Sigmoid colon (tissue), 7 donors: ENCODE measurements at regions of chr2 and their contacts with region 1.

Region 1: GRCh38 chr2:47437287-47437686 is 34.3 kb downstream of the MSH2 start:
- DNase-seq: no peak
- H3K4me3 ChIP-seq: no peak overlapping the region
- H3K27ac ChIP-seq: no peak overlapping the region
- H3K4me1 ChIP-seq: no peaks in the 10 kb centered on the region
- H3K27me3 ChIP-seq: no peaks in the 10 kb centered on the region
- CTCF ChIP-seq: peak in 2 of 4 experiments; percentile 6 to 33
- EP300 ChIP-seq: no peak
- POLR2A ChIP-seq: no peak

Region 2: GRCh38 chr2:47534179-47534919 is 97.1 kb after region 1 on chr2:
- intact Hi-C with region 1: no loop called
- DNase-seq: peak; percentile 73
- H3K4me3 ChIP-seq: no peak overlapping the region
- H3K27ac ChIP-seq: no peak overlapping the region
- H3K4me1 ChIP-seq: peaks cover 0 to 11% (median 7%) of the 10 kb centered on the region in 4 donors
- H3K27me3 ChIP-seq: no peaks in the 10 kb centered on the region
- CTCF ChIP-seq: no peak
- EP300 ChIP-seq: no peak
- POLR2A ChIP-seq: no peak

Region 3: DNA sequence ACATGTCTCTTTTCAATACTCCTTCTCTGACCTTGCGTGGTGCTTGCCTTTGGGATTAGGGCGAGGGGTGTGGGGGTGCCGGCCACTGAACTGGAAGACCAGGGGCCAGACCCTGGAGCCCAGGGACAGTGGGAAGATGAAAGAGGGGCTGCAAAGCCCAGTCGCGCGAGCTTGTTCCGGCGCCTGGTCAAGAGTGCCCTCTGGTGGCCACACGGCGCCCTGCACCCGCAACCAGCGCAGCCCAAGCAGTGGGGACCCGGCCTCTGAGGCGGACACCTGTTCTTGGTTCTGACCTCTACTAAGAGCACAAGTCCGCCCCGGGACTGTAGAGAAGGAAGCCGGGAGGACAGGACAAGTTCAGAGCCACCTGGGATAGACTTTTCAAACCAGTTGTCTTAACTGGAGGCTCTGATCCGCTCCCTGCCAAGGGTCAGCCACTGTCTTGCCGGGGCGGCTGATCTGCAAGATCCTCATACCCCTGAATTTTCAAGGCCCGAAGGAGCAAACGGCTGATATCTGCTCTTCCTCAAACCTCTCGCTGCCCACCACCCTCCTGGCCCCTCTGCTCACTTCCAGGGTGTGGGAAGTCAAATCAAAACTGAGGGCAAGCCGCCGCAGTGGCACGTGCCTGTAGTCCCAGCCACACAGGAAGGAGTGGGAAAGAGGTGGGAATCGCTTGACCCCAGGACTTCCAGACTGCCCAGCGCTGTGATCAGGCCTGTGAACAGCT is 330.8 kb after region 1 on chr2:
- intact Hi-C with region 1: loop called (anchors 1 kb)
- DNase-seq: peak; percentile 79
- H3K4me3 ChIP-seq: no peak overlapping the region
- H3K27ac ChIP-seq: no peak overlapping the region
- H3K4me1 ChIP-seq: no peaks in the 10 kb centered on the region
- H3K27me3 ChIP-seq: no peaks in the 10 kb centered on the region
- CTCF ChIP-seq: peak; percentile 84 to 99 (median 93)
- EP300 ChIP-seq: no peak
- POLR2A ChIP-seq: no peak

Region 4: DNA sequence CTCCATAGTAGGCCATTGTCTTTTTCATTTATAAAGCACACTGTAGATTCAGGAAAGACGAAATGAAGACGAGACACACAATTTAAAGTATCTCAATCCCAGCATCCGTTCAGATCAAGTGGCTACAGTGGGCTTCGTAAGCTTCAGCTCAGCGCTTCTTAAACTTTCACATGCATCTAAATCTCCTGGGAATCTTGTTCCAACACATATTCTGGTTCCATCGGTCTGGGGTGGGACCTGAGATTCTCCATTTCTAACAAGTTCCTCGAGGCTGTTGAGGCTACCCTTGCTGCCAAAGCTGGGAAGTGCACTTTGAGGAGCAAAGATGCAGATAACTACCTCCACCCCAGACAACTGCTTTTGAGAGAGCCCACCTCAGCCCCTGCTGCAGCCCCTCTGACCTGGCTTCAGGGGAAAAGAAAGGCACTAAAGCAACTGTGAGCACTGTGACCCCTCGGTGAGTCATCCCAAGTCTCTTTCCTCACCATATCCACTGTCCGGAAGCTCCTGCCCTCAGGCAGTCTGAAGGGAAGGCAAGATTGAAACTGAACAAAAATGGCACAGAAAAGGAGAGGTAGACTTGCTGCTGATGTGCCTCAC is 670.1 kb after region 1 on chr2:
- intact Hi-C with region 1: loop called (anchors 2 kb)
- DNase-seq: no peak
- H3K4me3 ChIP-seq: no peak overlapping the region
- H3K27ac ChIP-seq: peak overlapping the region in 3 of 4 donors; percentile 69 to 71 (median 69)
- H3K4me1 ChIP-seq: peaks cover 0 to 27% (median 17%) of the 10 kb centered on the region in 4 donors
- H3K27me3 ChIP-seq: no peaks in the 10 kb centered on the region
- CTCF ChIP-seq: no peak
- EP300 ChIP-seq: no peak
- POLR2A ChIP-seq: no peak

Region 5: DNA sequence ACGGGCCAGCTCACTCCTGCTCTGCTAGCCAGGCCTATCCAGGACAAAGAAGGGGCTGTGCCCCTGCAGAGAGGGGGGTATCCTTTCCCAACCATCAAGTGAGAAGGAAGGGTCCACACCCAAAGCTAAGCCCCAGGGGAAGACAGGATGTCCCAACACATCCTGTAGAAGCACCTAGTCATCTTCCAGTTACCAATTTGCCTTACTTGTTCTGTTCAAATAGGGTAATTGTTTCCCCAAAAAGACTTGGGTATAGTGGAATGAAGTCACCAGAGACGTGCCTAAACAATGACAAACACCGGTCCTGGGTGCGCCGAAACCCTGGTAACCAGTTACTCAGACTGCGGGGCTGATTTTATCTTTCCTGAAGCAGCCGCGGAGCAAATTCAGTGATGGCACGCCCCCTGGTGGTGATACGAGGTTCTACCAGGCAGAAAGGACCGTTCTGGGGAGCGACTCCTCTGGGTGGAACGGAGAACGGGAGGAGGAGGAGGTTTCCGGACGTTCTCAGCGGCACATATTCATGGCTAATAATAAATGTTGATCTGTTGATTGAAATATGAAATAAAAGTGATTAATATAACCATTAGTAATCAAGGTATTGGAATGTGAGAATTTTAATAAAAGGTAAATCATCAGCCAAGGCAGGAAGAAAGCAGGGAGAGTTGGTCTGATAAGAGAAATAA is 983.4 kb after region 1 on chr2:
- intact Hi-C with region 1: loop called (anchors 10 kb)
- DNase-seq: peak; percentile 91
- H3K4me3 ChIP-seq: no peak overlapping the region
- H3K27ac ChIP-seq: no peak overlapping the region
- H3K4me1 ChIP-seq: peaks cover 0 to 9% (median 4%) of the 10 kb centered on the region in 4 donors
- H3K27me3 ChIP-seq: peaks cover 0 to 2% (median 0%) of the 10 kb centered on the region in 3 donors
- CTCF ChIP-seq: peak; percentile 86 to 98 (median 94)
- EP300 ChIP-seq: no peak
- POLR2A ChIP-seq: no peak